MCF 10A (cell line): ENCODE measurements at regions of chr10 and their contacts with region 1.

Region 1: DNA sequence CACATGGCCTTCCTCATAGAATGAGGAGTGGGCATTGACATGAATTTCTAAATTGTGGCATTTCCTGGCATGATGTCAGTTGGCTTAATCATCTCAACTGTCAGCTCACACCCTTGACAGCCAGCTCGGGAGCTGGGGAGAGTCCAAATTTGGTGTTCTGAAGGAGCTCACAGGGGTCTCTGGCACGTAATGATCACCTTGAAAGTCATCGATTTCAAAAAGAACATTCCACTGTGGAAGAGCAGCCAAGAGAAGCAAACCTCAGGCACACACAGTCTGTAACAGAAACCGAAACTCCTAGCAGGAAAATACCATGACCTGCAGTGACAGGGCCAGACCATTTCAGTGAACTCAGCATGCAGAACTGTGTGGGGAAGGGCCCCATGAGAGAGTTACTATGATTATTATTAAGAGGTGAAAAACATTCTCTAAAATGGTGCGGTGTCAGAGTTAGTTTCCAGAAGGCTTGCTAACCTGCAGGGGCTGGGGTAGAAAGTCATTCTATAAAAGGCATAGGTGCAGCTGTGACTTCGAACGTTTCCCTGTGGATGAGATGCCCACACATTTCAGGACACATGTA is 26.4 kb upstream of the KLF6 start:
- DNase-seq: peak; percentile 89
- H3K4me3 Mint-ChIP-seq: peak overlapping the region; percentile 61
- H3K27ac Mint-ChIP-seq: peak overlapping the region; percentile 100
- H3K4me1 Mint-ChIP-seq: peaks cover 51% of the 10 kb centered on the region
- H3K27me3 Mint-ChIP-seq: no peaks in the 10 kb centered on the region
- CTCF ChIP-seq: no peak

Region 2: GRCh38 chr10:3828404-3829155 is 17.2 kb after region 1 on chr10:
- CTCF ChIA-PET with region 1: interaction called, 3 read pairs
- POLR2A ChIA-PET with region 1: interaction called, 150 read pairs
- intact Hi-C with region 1: no loop called
- DNase-seq: peak; percentile 55
- H3K4me3 Mint-ChIP-seq: peak overlapping the region; percentile 52
- H3K27ac Mint-ChIP-seq: peak overlapping the region; percentile 69
- H3K4me1 Mint-ChIP-seq: peaks cover 25% of the 10 kb centered on the region
- H3K27me3 Mint-ChIP-seq: no peaks in the 10 kb centered on the region
- CTCF ChIP-seq: no peak

Region 3: GRCh38 chr10:3895045-3895631 is 83.8 kb after region 1 on chr10:
- CTCF ChIA-PET with region 1: no interaction called
- POLR2A ChIA-PET with region 1: interaction called, 35 read pairs
- intact Hi-C with region 1: no loop called
- DNase-seq: peak; percentile 10
- H3K4me3 Mint-ChIP-seq: no peak overlapping the region
- H3K27ac Mint-ChIP-seq: no peak overlapping the region
- H3K4me1 Mint-ChIP-seq: peaks cover 31% of the 10 kb centered on the region
- H3K27me3 Mint-ChIP-seq: no peaks in the 10 kb centered on the region
- CTCF ChIP-seq: no peak

Region 4: DNA sequence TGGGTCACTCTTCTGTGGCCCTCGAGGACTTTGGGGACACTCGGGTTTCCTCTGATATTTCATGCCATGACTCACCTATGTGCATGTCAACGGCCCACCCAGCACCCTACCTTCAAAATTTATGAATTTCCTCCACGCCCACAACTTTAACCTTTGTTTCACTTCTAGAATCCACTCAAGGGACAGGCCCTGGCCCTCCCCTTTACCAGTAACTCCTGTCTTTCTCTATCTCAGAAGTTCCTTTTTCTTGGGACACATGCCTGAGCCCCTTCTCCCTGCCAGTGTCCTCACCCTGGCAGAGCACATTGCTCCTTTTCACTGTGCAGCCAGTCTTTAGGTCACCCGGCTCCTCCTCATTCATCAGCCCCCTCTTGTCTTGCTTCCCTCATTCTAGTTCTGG is 256.1 kb after region 1 on chr10:
- CTCF ChIA-PET with region 1: no interaction called
- POLR2A ChIA-PET with region 1: no interaction called
- intact Hi-C with region 1: no loop called
- DNase-seq: no peak
- H3K4me3 Mint-ChIP-seq: no peak overlapping the region
- H3K27ac Mint-ChIP-seq: no peak overlapping the region
- H3K4me1 Mint-ChIP-seq: peaks cover under 1% of the 10 kb centered on the region
- H3K27me3 Mint-ChIP-seq: no peaks in the 10 kb centered on the region
- CTCF ChIP-seq: no peak

Region 5: DNA sequence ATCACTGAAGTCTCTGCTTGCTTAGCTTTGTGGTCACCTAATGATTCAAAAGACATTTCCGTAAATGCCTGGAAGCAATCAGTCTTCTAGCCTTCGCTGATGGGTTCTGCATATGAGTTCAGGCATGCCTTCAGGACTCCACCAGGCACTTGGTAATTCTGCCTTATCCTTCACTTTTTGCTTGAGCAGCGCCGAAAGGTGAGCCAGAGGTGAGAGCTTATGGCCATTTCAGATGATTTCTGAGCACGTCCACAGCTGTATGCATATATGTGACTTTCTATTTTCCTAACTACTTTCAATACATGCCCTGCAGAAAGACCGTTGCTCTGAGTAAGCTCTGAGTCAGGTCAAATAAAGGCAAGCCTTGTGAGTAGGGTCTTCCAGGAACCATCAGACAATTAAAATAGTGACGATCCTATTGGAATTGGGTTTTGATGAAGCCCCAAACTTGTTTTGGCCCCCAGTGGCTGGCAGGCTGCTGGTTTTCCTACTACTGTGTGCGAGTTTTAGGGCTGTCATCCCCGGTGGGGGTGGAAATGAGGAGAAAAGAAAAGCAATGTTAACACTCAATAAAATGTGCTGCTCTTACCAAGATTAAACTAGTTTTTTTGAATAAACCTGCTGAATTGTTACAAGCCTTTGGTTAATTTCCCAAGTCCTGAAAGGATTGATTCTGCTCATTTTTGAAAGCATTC is 860.2 kb after region 1 on chr10:
- CTCF ChIA-PET with region 1: no interaction called
- POLR2A ChIA-PET with region 1: interaction called, 16 read pairs
- intact Hi-C with region 1: no loop called
- DNase-seq: peak; percentile 72
- H3K4me3 Mint-ChIP-seq: peak overlapping the region; percentile 56
- H3K27ac Mint-ChIP-seq: peak overlapping the region; percentile 90
- H3K4me1 Mint-ChIP-seq: peaks cover 27% of the 10 kb centered on the region
- H3K27me3 Mint-ChIP-seq: no peaks in the 10 kb centered on the region
- CTCF ChIP-seq: no peak